Activated CD8-positive, alpha-beta T cell treated with anti-CD3 and anti-CD28 coated beads, Interleukin-2, amount 10 ng/mL, durations not matched to agents 7 days and 5 days (primary cell): ENCODE measurements at regions of chr15 and their contacts with region 1.

Region 1: DNA sequence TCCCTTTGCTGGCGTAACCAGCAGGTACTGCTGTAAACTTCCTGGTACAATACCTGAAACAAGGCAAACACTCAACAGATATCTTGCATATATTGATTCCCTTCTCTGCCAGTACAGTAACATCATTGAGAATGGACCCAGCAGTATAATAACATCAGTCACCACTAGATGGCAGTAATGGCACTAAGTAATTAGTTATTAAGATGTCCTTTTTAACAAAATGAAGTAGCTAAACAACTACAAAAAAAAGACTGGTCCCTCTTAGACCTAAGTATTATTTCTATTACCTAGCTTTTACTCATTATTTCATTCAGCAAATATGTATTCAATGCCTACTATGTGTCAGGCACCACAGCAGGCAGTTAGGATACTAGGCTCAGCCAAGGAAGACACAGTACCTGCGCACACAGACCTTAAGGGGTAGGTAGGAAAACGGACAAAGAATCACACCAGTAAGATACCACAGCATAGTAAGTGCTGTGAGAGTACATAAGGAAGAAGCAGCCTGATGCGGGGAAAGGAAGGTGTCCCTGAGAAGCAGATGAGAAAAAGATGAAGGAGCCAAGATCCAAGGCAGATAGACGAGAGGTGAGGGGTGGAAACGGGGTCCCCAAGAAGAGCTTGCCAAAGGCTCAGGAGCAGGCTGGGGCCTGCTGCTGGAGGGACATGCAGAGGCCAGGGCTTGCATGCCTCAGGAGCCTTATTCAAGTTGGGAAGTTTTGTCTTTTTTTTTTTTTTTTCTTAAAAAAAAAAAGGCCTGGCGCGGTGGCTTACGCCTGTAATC is 102.8 kb upstream of the CHD2 start:
- DNase-seq: peak; percentile 68
- ATAC-seq: peak; percentile 87
- H3K4me3 Mint-ChIP-seq: no peak overlapping the region
- H3K27ac Mint-ChIP-seq: no peak overlapping the region
- H3K4me1 Mint-ChIP-seq: peaks cover 4% of the 10 kb centered on the region
- H3K27me3 Mint-ChIP-seq: no peaks in the 10 kb centered on the region

Region 2: DNA sequence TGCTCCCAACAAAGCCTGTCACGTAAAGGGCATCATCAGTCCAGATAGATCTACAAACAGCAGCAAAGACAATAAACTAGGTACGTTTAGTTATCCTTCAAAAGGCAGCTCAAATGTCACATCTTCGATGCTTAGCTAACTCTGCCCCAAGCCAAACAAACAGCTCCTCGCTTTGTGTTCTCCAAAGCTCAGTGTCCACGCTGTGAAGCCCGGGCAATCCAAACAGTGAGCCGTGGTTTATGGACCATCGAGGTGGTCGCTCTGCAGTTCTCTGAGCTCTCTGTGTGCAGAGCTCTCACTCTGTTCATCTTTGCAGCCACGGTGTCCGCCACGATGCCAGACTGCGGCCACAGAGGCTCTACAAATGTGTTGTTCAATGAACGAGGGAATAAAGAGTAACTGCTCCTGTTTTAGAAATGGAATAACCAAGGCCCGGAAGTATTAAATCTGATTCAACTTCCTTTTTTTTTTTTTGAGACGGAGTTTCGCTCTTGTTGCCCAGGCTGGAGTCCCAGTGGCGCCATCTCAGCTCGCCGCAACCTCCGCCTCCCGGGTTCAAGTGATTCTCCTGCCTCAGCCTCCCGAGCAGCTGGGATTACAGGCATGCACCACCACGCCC is 24.6 kb before region 1 on chr15:
- CTCF ChIA-PET with region 1: no interaction called
- POLR2A ChIA-PET with region 1: no interaction called
- DNase-seq: no peak
- ATAC-seq: no peak
- H3K4me3 Mint-ChIP-seq: no peak overlapping the region
- H3K27ac Mint-ChIP-seq: no peak overlapping the region
- H3K4me1 Mint-ChIP-seq: no peaks in the 10 kb centered on the region
- H3K27me3 Mint-ChIP-seq: no peaks in the 10 kb centered on the region

Region 3: GRCh38 chr15:92808978-92809879 is 11.9 kb after region 1 on chr15:
- CTCF ChIA-PET with region 1: interaction called, 41 read pairs
- POLR2A ChIA-PET with region 1: interaction called, 10 read pairs
- DNase-seq: peak; percentile 99
- ATAC-seq: peak; percentile 86
- H3K4me3 Mint-ChIP-seq: peak overlapping the region; percentile 81
- H3K27ac Mint-ChIP-seq: peak overlapping the region; percentile 96
- H3K4me1 Mint-ChIP-seq: peaks cover 50% of the 10 kb centered on the region
- H3K27me3 Mint-ChIP-seq: no peaks in the 10 kb centered on the region

Region 4: GRCh38 chr15:92917606-92918407 is 120.4 kb after region 1 on chr15:
- CTCF ChIA-PET with region 1: interaction called, 87 read pairs
- POLR2A ChIA-PET with region 1: interaction called, 3 read pairs
- DNase-seq: peak; percentile 97
- ATAC-seq: peak; percentile 36
- H3K4me3 Mint-ChIP-seq: peak overlapping the region; percentile 12
- H3K27ac Mint-ChIP-seq: peak overlapping the region; percentile 79
- H3K4me1 Mint-ChIP-seq: peaks cover 84% of the 10 kb centered on the region
- H3K27me3 Mint-ChIP-seq: no peaks in the 10 kb centered on the region

Region 5: DNA sequence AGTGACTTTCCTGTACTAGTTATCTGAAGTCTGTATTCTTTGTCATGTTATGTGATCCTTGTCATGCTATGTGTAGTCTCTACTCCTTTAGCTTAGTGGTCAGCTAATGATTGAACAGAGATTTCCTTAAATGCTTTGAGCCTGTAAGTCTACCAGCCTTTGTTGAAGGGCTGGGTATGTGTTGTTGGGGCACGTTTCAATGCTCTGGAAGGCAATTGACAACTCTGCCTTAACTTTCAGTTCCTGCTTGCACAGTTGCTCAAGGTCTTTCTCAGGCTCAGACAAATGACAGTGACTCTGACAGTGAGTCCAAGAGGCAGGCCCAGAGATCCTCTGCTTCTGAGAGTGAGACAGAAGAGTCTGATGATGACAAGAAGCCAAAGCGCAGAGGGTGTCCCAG is 192.1 kb after region 1 on chr15:
- CTCF ChIA-PET with region 1: interaction called, 14 read pairs
- POLR2A ChIA-PET with region 1: no interaction called
- DNase-seq: no peak
- ATAC-seq: no peak
- H3K4me3 Mint-ChIP-seq: no peak overlapping the region
- H3K27ac Mint-ChIP-seq: no peak overlapping the region
- H3K4me1 Mint-ChIP-seq: peaks cover 2% of the 10 kb centered on the region
- H3K27me3 Mint-ChIP-seq: no peaks in the 10 kb centered on the region

Region 6: DNA sequence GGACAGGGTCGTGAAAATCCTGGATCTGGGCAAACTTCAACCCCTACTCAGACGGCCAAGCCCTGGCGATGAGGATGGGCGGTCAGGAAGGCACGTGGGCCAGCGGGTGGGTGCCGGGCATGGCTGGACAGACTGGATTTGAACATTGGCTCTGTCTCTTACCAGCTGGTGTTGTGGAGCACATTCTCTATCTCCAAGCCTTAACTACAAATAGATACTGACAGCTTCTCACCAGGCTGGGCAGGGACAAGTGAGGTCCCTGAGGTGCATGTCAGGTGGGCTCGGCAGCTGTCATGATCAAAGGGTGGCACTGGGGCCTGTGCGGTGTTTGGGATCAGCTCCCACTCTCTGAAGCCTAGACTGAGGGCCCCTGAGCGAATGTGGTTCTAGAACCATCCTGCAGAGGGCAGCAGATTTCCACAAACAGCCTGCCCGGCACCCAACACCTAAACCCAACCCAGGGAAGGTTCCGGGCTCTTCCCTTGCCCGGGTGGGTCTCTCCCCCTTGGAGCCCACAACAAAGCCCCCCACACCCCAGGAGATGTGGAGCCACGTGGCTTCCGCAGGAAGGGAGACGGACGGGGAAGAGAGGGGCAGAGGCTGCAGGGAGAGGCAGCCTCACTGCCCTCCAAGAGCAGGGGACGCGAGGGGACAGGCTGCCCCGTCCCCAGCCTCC is 233.2 kb after region 1 on chr15:
- CTCF ChIA-PET with region 1: interaction called, 41 read pairs
- POLR2A ChIA-PET with region 1: interaction called, 4 read pairs
- DNase-seq: peak; percentile 77
- ATAC-seq: peak; percentile 85
- H3K4me3 Mint-ChIP-seq: no peak overlapping the region
- H3K27ac Mint-ChIP-seq: peak overlapping the region; percentile 33
- H3K4me1 Mint-ChIP-seq: peaks cover 20% of the 10 kb centered on the region
- H3K27me3 Mint-ChIP-seq: no peaks in the 10 kb centered on the region

Region 7: DNA sequence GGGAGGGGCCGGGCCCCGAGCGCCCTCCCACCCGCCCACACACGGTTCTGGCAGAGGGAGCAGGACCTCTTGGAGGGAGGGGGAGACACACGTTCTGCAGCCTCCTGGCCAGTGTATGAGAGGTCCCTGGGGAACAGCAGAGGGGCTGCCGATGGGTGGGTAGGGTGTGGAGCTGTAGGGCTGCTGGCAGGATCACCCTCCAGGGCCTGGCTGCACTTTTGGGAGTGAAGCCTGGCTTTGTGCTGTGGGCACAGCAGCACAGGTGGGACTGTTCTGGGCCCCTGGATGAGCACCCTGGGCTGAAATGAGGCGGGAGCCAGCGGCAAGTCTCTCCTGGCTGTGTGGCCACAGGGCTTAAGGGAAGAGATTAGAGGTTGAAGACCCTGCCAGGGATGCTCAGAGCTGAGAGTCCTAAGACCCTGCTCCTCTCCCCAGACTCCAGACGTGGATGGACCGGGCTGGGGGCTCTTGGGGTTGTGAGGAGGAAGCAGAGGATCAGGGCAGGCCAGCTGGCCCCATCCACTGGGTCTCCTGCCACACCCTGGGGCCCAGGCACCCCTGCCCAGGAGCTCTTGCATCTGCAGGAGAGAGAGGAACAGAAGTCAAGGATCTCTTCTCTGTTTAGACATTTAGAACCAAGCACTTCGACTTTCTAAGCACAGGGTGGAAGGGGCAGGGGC is 246.4 kb after region 1 on chr15:
- CTCF ChIA-PET with region 1: no interaction called
- POLR2A ChIA-PET with region 1: no interaction called
- DNase-seq: no peak
- ATAC-seq: no peak
- H3K4me3 Mint-ChIP-seq: no peak overlapping the region
- H3K27ac Mint-ChIP-seq: no peak overlapping the region
- H3K4me1 Mint-ChIP-seq: peaks cover 15% of the 10 kb centered on the region
- H3K27me3 Mint-ChIP-seq: peaks cover 3% of the 10 kb centered on the region

Region 8: GRCh38 chr15:93413745-93414144 is 616.4 kb after region 1 on chr15:
- CTCF ChIA-PET with region 1: no interaction called
- POLR2A ChIA-PET with region 1: no interaction called
- DNase-seq: no peak
- ATAC-seq: no peak
- H3K4me3 Mint-ChIP-seq: no peak overlapping the region
- H3K27ac Mint-ChIP-seq: no peak overlapping the region
- H3K4me1 Mint-ChIP-seq: no peaks in the 10 kb centered on the region
- H3K27me3 Mint-ChIP-seq: no peaks in the 10 kb centered on the region